ENCODE measurements at regions of chr18 and their contacts with region 1.

Region 1: GRCh38 chr18:11947214-11948191 is 33.8 kb upstream of the IMPA2 start:
- DNase-seq: peak; percentile 93 to 97 (median 95)
- ATAC-seq: peak; percentile 98 to 99 (median 98)
- H3K4me3 ChIP-seq: peak overlapping the region; percentile 4 to 86 (median 65)
- H3K27ac ChIP-seq: peak overlapping the region; percentile 88 to 100 (median 96)
- H3K4me1 ChIP-seq: peaks cover 0 to 22% (median 13%) of the 10 kb centered on the region in 12 donors
- H3K27me3 ChIP-seq: no peaks in the 10 kb centered on the region
- CTCF ChIP-seq: peak in 2 of 12 donors; percentile 5 to 15
- POLR2A ChIP-seq: peak in 1 of 2 donors; percentile 86

Region 2: DNA sequence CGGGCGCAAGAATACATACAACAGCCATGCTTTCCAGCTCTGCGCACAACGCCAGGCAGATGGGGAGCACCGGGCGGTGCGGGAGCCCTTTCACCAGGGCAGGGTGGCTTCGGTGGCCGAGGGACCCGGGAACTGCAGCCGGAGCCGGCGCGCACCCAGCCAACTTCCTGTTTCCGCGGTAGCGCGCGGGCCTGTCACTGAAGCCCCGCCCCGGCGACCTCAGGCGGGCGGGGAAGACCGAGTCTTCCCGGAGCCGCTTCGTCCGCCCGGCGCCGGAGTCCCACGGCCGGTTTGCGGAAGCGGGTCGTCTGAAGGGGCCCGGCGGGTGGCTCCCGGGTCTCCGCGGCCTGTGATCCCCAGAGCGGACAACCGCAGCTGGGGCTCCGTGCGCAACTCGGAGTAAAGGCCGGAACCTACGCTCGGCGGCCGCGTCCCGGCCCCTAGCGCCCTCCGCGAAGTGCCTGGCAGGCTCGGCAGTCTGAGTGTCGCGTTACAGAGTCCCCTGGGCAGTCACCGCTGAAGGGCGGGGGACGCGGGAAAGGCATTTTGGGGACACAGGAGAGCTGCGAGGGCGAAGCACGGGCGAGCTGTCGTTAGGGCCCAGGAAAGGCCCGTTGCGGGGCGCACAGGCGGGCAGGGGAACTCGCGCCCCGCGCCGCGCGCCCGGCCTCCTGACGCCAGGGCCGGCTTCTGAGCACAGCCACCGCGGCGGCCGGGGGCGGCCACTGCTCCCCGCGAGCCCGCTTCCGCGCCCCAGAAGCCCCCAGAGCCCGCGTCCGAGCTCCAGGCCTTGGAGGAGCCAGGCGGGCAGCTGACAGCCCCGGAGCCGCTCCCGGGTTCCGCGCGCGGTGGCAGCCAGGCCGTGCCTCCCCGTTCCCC is 39.1 kb before region 1 on chr18 and contains the start of gene MPPE1:
- intact Hi-C with region 1: loop called in 1 of 10 experiments (anchors 1 kb)
- DNase-seq: peak; percentile 92 to 96 (median 93)
- ATAC-seq: peak; percentile 79 to 97 (median 95)
- H3K4me3 ChIP-seq: peak within 1 kb of the TSS; percentile 62 to 95 (median 78)
- H3K27ac ChIP-seq: peak within 1 kb of the TSS; percentile 95 to 100 (median 98)
- H3K4me1 ChIP-seq: peaks cover 0 to 34% (median 17%) of the 10 kb centered on the region in 12 donors
- H3K27me3 ChIP-seq: no peaks in the 10 kb centered on the region
- CTCF ChIP-seq: peak in 3 of 12 donors; percentile 5 to 7 (median 5)
- POLR2A ChIP-seq: peak; percentile 65 to 83
- total RNA-seq, gene MPPE1: 17.8 to 45.5 (median 29.7) TPM

Region 3: GRCh38 chr18:11989973-11990380 is 42.5 kb after region 1 on chr18:
- intact Hi-C with region 1: loop called in 1 of 10 experiments (anchors 2 kb)
- DNase-seq: no peak
- ATAC-seq: no peak
- H3K4me3 ChIP-seq: no peak overlapping the region
- H3K27ac ChIP-seq: peak overlapping the region in 5 of 12 donors; percentile 0 to 58 (median 29)
- H3K4me1 ChIP-seq: peaks cover 0 to 54% (median 19%) of the 10 kb centered on the region in 12 donors
- H3K27me3 ChIP-seq: no peaks in the 10 kb centered on the region
- CTCF ChIP-seq: no peak
- POLR2A ChIP-seq: no peak